Naive thymus-derived CD4-positive, alpha-beta T cell (primary cell): ENCODE measurements at regions of chr4 and their contacts with region 1.

Region 1: DNA sequence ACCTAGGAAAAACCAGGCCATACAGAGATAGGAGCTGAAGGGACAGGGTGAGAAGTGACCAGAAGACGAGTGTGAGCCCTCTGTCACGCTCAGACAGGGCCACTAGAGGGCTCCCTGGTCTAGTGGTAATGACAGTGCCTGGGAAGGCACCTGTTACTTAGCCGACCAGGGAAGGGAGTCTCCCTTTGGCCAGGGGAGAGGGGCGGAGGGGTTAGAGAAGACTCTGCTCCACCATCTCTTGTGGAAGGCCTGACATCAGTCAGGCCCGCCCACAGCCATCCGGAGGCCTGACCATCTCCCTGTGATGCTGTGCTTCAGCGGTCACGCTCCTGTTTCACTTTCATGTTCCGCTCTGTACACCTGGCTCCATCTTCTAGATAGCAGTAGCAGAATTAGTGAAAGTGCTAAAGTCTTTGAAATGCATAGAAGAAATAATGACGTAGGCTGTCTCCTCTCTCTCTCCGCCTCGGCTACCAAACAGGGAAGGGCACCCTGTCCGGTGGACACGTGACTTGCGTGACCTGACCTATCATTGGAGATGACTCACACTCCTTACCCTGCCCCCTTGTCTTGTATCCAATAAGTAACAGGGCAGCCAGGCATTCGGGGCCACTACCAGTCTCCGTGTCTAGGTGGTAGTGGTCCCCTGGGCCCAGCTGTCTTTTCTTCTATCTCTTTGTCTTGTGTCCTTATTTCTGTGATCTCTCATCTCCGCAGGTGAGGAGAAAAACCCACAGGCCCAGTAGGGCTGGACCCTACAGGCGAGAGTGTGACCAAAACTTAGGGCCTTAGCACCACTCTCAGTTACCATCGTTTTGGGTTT is 26.7 kb downstream of the HTT-AS start:
- DNase-seq: peak; percentile 40 to 75 (median 58)
- ATAC-seq: peak; percentile 79
- H3K4me3 ChIP-seq: peak overlapping the region; percentile 65
- H3K4me3 Mint-ChIP-seq: peak overlapping the region; percentile 62 to 92 (median 83)
- H3K27ac ChIP-seq: peak overlapping the region; percentile 61
- H3K27ac Mint-ChIP-seq: peak overlapping the region; percentile 79 to 90 (median 84)
- H3K4me1 ChIP-seq: peaks cover 16 to 18% of the 10 kb centered on the region in 2 donors
- H3K4me1 Mint-ChIP-seq: peaks cover 17 to 45% (median 35%) of the 10 kb centered on the region in 7 donors
- H3K27me3 ChIP-seq: no peaks in the 10 kb centered on the region
- H3K27me3 Mint-ChIP-seq: peaks cover 0 to 17% (median 0%) of the 10 kb centered on the region in 5 donors

Region 2: GRCh38 chr4:3136453-3136852 is 88.8 kb after region 1 on chr4:
- CTCF ChIA-PET with region 1: no interaction called
- POLR2A ChIA-PET with region 1: no interaction called
- intact Hi-C with region 1: loop called in 1 of 2 experiments (anchors 1 kb)
- DNase-seq: peak in 2 of 9 donors; percentile 4 to 11
- ATAC-seq: no peak
- H3K4me3 ChIP-seq: no peak overlapping the region
- H3K4me3 Mint-ChIP-seq: no peak overlapping the region
- H3K27ac ChIP-seq: no peak overlapping the region
- H3K27ac Mint-ChIP-seq: no peak overlapping the region
- H3K4me1 ChIP-seq: no peaks in the 10 kb centered on the region
- H3K4me1 Mint-ChIP-seq: peaks cover 0 to under 1% (median 0%) of the 10 kb centered on the region in 7 donors
- H3K27me3 ChIP-seq: no peaks in the 10 kb centered on the region
- H3K27me3 Mint-ChIP-seq: no peaks in the 10 kb centered on the region